HAP-1 (cell line): ENCODE measurements at regions of chr11 and their contacts with region 1.

Region 1: GRCh38 chr11:118503216-118503615 is 24.1 kb upstream of the TTC36 start:
- DNase-seq: no peak
- H3K4me3 ChIP-seq: no peak overlapping the region
- H3K4me1 ChIP-seq: no peaks in the 10 kb centered on the region
- H3K27me3 ChIP-seq: no peaks in the 10 kb centered on the region

Region 2: GRCh38 chr11:118374729-118375128 is 128.5 kb before region 1 on chr11:
- in situ Hi-C with region 1: loop called (anchors 10 kb)
- DNase-seq: no peak
- H3K4me3 ChIP-seq: no peak overlapping the region
- H3K4me1 ChIP-seq: no peaks in the 10 kb centered on the region
- H3K27me3 ChIP-seq: no peaks in the 10 kb centered on the region

Region 3: GRCh38 chr11:118856314-118856713 is 353.1 kb after region 1 on chr11:
- in situ Hi-C with region 1: no loop called
- DNase-seq: no peak
- H3K4me3 ChIP-seq: no peak overlapping the region
- H3K4me1 ChIP-seq: no peaks in the 10 kb centered on the region
- H3K27me3 ChIP-seq: no peaks in the 10 kb centered on the region